B cell (primary cell): ENCODE measurements at regions of chr10 and their contacts with region 1.

Region 1: GRCh38 chr10:75235375-75236177 is at the start of gene COMTD1:
- DNase-seq: peak; percentile 94
- ATAC-seq: peak; percentile 70
- H3K4me3 ChIP-seq: peak within 1 kb of the TSS; percentile 17 to 80 (median 71)
- H3K4me3 Mint-ChIP-seq: peak within 1 kb of the TSS; percentile 85
- H3K27ac ChIP-seq: peak within 1 kb of the TSS; percentile 2 to 57
- H3K27ac Mint-ChIP-seq: peak within 1 kb of the TSS; percentile 74
- H3K4me1 ChIP-seq: peaks cover 4 to 20% of the 10 kb centered on the region in 2 donors
- H3K4me1 Mint-ChIP-seq: peaks cover 18% of the 10 kb centered on the region
- H3K27me3 ChIP-seq: no peaks in the 10 kb centered on the region
- H3K27me3 Mint-ChIP-seq: no peaks in the 10 kb centered on the region
- CTCF ChIP-seq: peak; percentile 100
- total RNA-seq, gene COMTD1: 12.3 and 14.5 TPM in 2 replicates

Region 2: GRCh38 chr10:73495884-73496674 is 1739.5 kb before region 1 on chr10 and contains the start of gene PPP3CB:
- CTCF ChIA-PET with region 1: no interaction called
- POLR2A ChIA-PET with region 1: no interaction called
- intact Hi-C with region 1: loop called (anchors 5 kb)
- DNase-seq: peak; percentile 94
- ATAC-seq: peak; percentile 70
- H3K4me3 ChIP-seq: peak within 1 kb of the TSS; percentile 63 to 97 (median 85)
- H3K4me3 Mint-ChIP-seq: peak within 1 kb of the TSS; percentile 94
- H3K27ac ChIP-seq: peak within 1 kb of the TSS; percentile 89 to 93
- H3K27ac Mint-ChIP-seq: peak within 1 kb of the TSS; percentile 96
- H3K4me1 ChIP-seq: peaks cover 30 to 40% of the 10 kb centered on the region in 2 donors
- H3K4me1 Mint-ChIP-seq: peaks cover 52% of the 10 kb centered on the region
- H3K27me3 ChIP-seq: no peaks in the 10 kb centered on the region
- H3K27me3 Mint-ChIP-seq: no peaks in the 10 kb centered on the region
- CTCF ChIP-seq: no peak
- total RNA-seq, gene PPP3CB: 51.2 and 52.8 TPM in 2 replicates

Region 3: GRCh38 chr10:74244097-74244685 is 991.4 kb before region 1 on chr10:
- CTCF ChIA-PET with region 1: interaction called, 21 read pairs
- POLR2A ChIA-PET with region 1: no interaction called
- intact Hi-C with region 1: loop called (anchors 1 kb)
- DNase-seq: peak; percentile 51
- ATAC-seq: no peak
- H3K4me3 ChIP-seq: no peak overlapping the region
- H3K4me3 Mint-ChIP-seq: no peak overlapping the region
- H3K27ac ChIP-seq: no peak overlapping the region
- H3K27ac Mint-ChIP-seq: no peak overlapping the region
- H3K4me1 ChIP-seq: no peaks in the 10 kb centered on the region
- H3K4me1 Mint-ChIP-seq: peaks cover 4% of the 10 kb centered on the region
- H3K27me3 ChIP-seq: no peaks in the 10 kb centered on the region
- H3K27me3 Mint-ChIP-seq: no peaks in the 10 kb centered on the region
- CTCF ChIP-seq: peak; percentile 78

Region 4: DNA sequence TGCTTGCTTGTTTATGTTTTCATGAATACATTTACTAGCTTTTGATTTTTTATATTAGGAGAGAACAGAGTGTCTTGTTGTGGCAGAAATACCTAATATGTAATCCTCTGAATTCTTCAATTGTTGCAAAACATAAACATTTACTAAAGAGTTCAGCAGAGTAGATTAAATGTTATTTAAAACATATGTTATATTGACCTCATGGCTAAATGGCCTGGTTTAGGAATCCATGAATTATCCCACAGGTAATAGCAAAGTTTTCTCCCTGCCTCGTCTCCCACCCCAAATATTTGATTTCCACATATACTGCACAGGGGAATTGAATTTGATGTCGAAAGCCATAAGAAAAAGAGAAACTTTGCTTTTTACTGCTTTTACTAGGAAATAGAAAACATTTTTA is 972.7 kb before region 1 on chr10:
- CTCF ChIA-PET with region 1: interaction called, 5 read pairs
- POLR2A ChIA-PET with region 1: no interaction called
- intact Hi-C with region 1: loop called (anchors 1 kb)
- DNase-seq: no peak
- ATAC-seq: no peak
- H3K4me3 ChIP-seq: no peak overlapping the region
- H3K4me3 Mint-ChIP-seq: no peak overlapping the region
- H3K27ac ChIP-seq: no peak overlapping the region
- H3K27ac Mint-ChIP-seq: peak overlapping the region; percentile 4
- H3K4me1 ChIP-seq: peaks cover 0 to 9% of the 10 kb centered on the region in 2 donors
- H3K4me1 Mint-ChIP-seq: peaks cover 20% of the 10 kb centered on the region
- H3K27me3 ChIP-seq: no peaks in the 10 kb centered on the region
- H3K27me3 Mint-ChIP-seq: no peaks in the 10 kb centered on the region
- CTCF ChIP-seq: no peak

Region 5: GRCh38 chr10:74855027-74855426 is 380.5 kb before region 1 on chr10:
- CTCF ChIA-PET with region 1: no interaction called
- POLR2A ChIA-PET with region 1: no interaction called
- intact Hi-C with region 1: loop called (anchors 10 kb)
- DNase-seq: peak; percentile 38
- ATAC-seq: peak; percentile 16
- H3K4me3 ChIP-seq: peak overlapping the region in 1 of 5 experiments; percentile 21
- H3K4me3 Mint-ChIP-seq: peak overlapping the region; percentile 68
- H3K27ac ChIP-seq: peak overlapping the region; percentile 72 to 88
- H3K27ac Mint-ChIP-seq: peak overlapping the region; percentile 82
- H3K4me1 ChIP-seq: peaks cover 28 to 31% of the 10 kb centered on the region in 2 donors
- H3K4me1 Mint-ChIP-seq: peaks cover 45% of the 10 kb centered on the region
- H3K27me3 ChIP-seq: no peaks in the 10 kb centered on the region
- H3K27me3 Mint-ChIP-seq: no peaks in the 10 kb centered on the region
- CTCF ChIP-seq: no peak

Region 6: DNA sequence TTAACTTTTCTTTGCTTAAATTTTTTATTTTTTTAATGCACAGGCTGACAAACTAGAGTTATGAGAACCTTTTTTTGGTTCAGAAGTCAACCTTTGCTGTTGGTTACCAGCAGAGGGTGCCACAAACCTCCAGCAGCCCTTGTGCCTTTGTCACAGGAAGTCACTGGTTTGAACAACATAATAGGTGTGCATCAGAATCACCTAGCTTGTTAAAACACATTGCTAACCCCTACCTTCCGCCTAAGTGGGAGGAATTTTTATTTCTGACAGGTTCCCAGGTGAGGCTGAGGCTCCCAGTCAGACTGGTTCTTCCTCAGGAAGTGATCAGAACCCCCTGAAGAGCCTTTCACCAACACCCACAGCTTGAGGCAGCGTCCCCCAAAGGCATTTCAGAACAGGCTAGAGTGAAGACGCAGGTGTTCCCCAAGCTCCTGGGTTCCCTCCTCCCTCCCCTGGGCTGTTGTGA is 47.6 kb before region 1 on chr10:
- CTCF ChIA-PET with region 1: interaction called, 138 read pairs
- POLR2A ChIA-PET with region 1: interaction called, 5 read pairs
- intact Hi-C with region 1: loop called (anchors 1 kb)
- DNase-seq: peak; percentile 77
- ATAC-seq: peak; percentile 73
- H3K4me3 ChIP-seq: no peak overlapping the region
- H3K4me3 Mint-ChIP-seq: no peak overlapping the region
- H3K27ac ChIP-seq: peak overlapping the region in 1 of 2 donors; percentile 11
- H3K27ac Mint-ChIP-seq: peak overlapping the region; percentile 41
- H3K4me1 ChIP-seq: peaks cover 3% of the 10 kb centered on the region in 2 donors
- H3K4me1 Mint-ChIP-seq: no peaks in the 10 kb centered on the region
- H3K27me3 ChIP-seq: no peaks in the 10 kb centered on the region
- H3K27me3 Mint-ChIP-seq: no peaks in the 10 kb centered on the region
- CTCF ChIP-seq: peak; percentile 79

Region 7: GRCh38 chr10:75210282-75211006 is 25.1 kb before region 1 on chr10 and contains the start of gene VDAC2:
- CTCF ChIA-PET with region 1: interaction called, 100 read pairs
- POLR2A ChIA-PET with region 1: interaction called, 27 read pairs
- intact Hi-C with region 1: loop called (anchors 1 kb)
- DNase-seq: peak; percentile 99
- ATAC-seq: peak; percentile 89
- H3K4me3 ChIP-seq: peak within 1 kb of the TSS; percentile 84 to 98 (median 93)
- H3K4me3 Mint-ChIP-seq: peak within 1 kb of the TSS; percentile 95
- H3K27ac ChIP-seq: peak within 1 kb of the TSS; percentile 97 to 100
- H3K27ac Mint-ChIP-seq: peak within 1 kb of the TSS; percentile 98
- H3K4me1 ChIP-seq: peaks cover 12 to 20% of the 10 kb centered on the region in 2 donors
- H3K4me1 Mint-ChIP-seq: peaks cover 24% of the 10 kb centered on the region
- H3K27me3 ChIP-seq: no peaks in the 10 kb centered on the region
- H3K27me3 Mint-ChIP-seq: no peaks in the 10 kb centered on the region
- CTCF ChIP-seq: no peak
- total RNA-seq, gene VDAC2: 83.6 and 86.4 TPM in 2 replicates